Activated CD4-positive, alpha-beta T cell treated with anti-CD3 and anti-CD28 coated beads for 36 hours (primary cell): ENCODE measurements at regions of chr15 and their contacts with region 1.

Region 1: DNA sequence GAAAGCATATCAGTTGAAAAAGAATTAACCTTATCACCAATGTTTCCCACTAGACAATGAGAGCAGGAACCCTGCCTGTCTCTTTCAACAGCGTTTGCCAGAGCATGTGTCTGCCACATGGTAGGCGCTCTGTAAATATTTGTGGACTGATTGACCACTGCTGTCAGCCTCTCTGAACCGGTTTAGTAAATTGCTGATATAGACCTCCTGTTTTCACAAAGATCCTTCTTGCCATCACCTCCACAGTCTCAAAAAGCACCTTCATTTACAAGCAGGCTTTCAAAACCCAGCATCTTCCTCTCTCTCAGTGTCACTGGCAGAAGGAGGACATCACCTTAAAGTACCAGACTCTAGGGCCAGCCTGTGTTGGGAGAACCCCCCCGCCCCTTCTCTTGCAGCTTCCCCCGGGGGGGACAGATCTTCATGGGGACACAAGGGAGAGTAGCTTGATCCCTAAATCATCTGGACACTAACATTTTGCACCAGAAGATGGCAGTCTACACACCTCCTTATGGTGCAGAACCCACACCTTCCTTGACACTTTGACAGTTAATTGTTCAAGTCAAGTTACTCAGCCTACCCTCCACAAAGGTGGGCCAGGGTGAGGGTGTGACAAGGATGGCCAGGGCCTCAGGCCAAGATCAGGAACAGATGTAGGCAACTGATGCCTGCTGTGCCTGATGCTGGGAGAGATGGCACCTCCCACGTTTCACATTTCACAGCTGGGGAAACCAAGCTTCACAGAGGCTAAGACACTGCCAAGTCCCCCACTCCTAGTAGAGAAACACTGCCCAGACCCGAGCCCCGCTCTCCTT is 37.8 kb upstream of the USP3 start:
- DNase-seq: peak; percentile 62
- ATAC-seq: peak; percentile 78
- H3K4me3 Mint-ChIP-seq: no peak overlapping the region
- H3K27ac Mint-ChIP-seq: no peak overlapping the region
- H3K4me1 Mint-ChIP-seq: peaks cover 26% of the 10 kb centered on the region
- H3K27me3 Mint-ChIP-seq: no peaks in the 10 kb centered on the region

Region 2: DNA sequence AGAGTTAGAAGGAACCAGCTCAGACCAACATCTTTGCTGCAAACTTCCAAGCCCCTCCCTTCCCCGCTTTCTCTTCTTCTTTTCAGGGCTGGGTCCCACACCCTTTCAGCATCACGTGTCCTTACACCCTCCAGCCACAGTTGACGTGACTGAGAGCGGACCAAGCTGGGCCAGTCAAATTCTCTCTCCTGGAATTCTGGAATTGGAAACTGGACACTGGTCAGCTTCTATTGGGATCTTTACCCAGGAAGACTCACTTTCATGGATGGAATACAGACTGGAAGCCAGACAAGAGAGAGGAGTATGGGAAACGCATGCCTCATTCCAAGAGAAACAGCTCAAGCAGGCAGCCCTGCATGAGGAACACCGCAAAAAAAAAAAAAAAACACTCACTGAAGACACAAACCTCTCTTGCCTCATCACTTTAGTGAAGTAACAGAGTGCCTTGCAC is 436.5 kb before region 1 on chr15:
- CTCF ChIA-PET with region 1: no interaction called
- POLR2A ChIA-PET with region 1: no interaction called
- intact Hi-C with region 1: no loop called
- DNase-seq: no peak
- ATAC-seq: no peak
- H3K4me3 Mint-ChIP-seq: no peak overlapping the region
- H3K27ac Mint-ChIP-seq: no peak overlapping the region
- H3K4me1 Mint-ChIP-seq: no peaks in the 10 kb centered on the region
- H3K27me3 Mint-ChIP-seq: peaks cover 20% of the 10 kb centered on the region

Region 3: GRCh38 chr15:63238796-63239195 is 227.8 kb before region 1 on chr15:
- CTCF ChIA-PET with region 1: no interaction called
- POLR2A ChIA-PET with region 1: no interaction called
- intact Hi-C with region 1: no loop called
- DNase-seq: peak; percentile 52
- ATAC-seq: peak; percentile 83
- H3K4me3 Mint-ChIP-seq: no peak overlapping the region
- H3K27ac Mint-ChIP-seq: no peak overlapping the region
- H3K4me1 Mint-ChIP-seq: peaks cover 82% of the 10 kb centered on the region
- H3K27me3 Mint-ChIP-seq: no peaks in the 10 kb centered on the region

Region 4: GRCh38 chr15:63497642-63498467 is 31.3 kb after region 1 on chr15:
- CTCF ChIA-PET with region 1: interaction called, 7 read pairs
- POLR2A ChIA-PET with region 1: interaction called, 6 read pairs
- intact Hi-C with region 1: loop called (anchors 1 to 5 kb)
- DNase-seq: peak; percentile 71
- ATAC-seq: peak; percentile 56
- H3K4me3 Mint-ChIP-seq: no peak overlapping the region
- H3K27ac Mint-ChIP-seq: no peak overlapping the region
- H3K4me1 Mint-ChIP-seq: peaks cover 74% of the 10 kb centered on the region
- H3K27me3 Mint-ChIP-seq: no peaks in the 10 kb centered on the region

Region 5: DNA sequence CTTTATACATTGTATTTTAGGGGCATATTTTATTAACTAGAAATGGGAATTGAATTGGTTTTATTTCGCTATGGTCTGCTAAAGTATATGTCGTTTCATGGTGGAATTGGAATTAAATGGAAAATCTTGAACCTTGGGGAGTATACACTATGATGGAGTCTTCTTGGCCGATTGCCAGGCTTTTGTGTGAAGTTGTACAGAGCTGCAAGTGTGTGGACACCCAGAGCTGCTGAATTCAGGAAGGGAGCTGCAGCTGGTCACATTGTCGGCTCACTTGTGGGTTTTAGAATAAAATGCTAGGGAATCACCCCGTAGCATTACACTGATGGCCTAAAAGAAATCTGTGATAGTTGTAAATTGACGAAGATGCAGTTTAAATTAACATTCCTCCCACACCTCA is 72.9 kb after region 1 on chr15:
- CTCF ChIA-PET with region 1: interaction called, 10 read pairs
- POLR2A ChIA-PET with region 1: no interaction called
- intact Hi-C with region 1: no loop called
- DNase-seq: no peak
- ATAC-seq: no peak
- H3K4me3 Mint-ChIP-seq: no peak overlapping the region
- H3K27ac Mint-ChIP-seq: no peak overlapping the region
- H3K4me1 Mint-ChIP-seq: peaks cover 60% of the 10 kb centered on the region
- H3K27me3 Mint-ChIP-seq: no peaks in the 10 kb centered on the region

Region 6: DNA sequence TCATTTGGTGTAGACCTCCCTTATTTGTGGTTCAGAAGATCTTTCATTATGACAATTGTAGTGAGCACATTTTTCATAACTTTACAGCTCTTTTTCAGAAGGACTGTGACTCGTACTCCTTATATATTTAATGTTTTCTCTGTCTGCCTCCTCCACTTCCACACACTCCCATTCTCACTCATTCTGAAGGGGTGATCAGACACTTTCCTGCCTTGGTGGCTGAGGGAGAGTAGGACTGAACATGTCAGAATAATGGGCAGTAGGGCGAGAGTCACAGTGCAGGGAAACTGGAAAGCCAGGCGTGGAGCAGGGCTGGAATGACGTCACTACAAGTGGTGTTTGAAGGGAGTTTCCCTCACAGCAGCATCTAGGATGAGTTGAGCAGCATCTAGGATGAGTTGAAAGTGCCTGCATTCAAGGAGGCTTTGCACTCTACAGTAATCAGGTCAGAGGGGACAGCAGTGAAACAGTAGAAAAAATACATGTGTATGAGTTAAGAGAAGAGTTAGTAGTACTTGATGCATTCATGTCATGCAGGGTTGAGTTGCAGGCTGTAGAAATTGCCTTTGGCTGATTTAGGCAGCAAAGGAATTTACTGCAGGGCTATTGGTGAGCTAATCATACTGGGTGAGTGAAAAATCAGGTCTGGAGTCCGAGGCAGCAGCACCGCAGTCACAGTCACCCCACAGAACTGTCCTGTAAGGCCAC is 94.3 kb after region 1 on chr15:
- CTCF ChIA-PET with region 1: interaction called, 5 read pairs
- POLR2A ChIA-PET with region 1: no interaction called
- intact Hi-C with region 1: loop called in 1 of 2 experiments (anchors 2 kb)
- DNase-seq: peak; percentile 81
- ATAC-seq: peak; percentile 95
- H3K4me3 Mint-ChIP-seq: no peak overlapping the region
- H3K27ac Mint-ChIP-seq: peak overlapping the region; percentile 74
- H3K4me1 Mint-ChIP-seq: peaks cover 49% of the 10 kb centered on the region
- H3K27me3 Mint-ChIP-seq: no peaks in the 10 kb centered on the region

Region 7: GRCh38 chr15:63729115-63729884 is 262.7 kb after region 1 on chr15:
- CTCF ChIA-PET with region 1: no interaction called
- POLR2A ChIA-PET with region 1: interaction called, 9 read pairs
- intact Hi-C with region 1: loop called in 1 of 2 experiments (anchors 10 kb)
- DNase-seq: peak; percentile 60
- ATAC-seq: peak; percentile 85
- H3K4me3 Mint-ChIP-seq: no peak overlapping the region
- H3K27ac Mint-ChIP-seq: peak overlapping the region; percentile 61
- H3K4me1 Mint-ChIP-seq: peaks cover 20% of the 10 kb centered on the region
- H3K27me3 Mint-ChIP-seq: no peaks in the 10 kb centered on the region

Region 8: GRCh38 chr15:63848499-63849214 is 382.1 kb after region 1 on chr15:
- CTCF ChIA-PET with region 1: no interaction called
- POLR2A ChIA-PET with region 1: no interaction called
- intact Hi-C with region 1: no loop called
- DNase-seq: no peak
- ATAC-seq: no peak
- H3K4me3 Mint-ChIP-seq: no peak overlapping the region
- H3K27ac Mint-ChIP-seq: peak overlapping the region; percentile 49
- H3K4me1 Mint-ChIP-seq: peaks cover 13% of the 10 kb centered on the region
- H3K27me3 Mint-ChIP-seq: no peaks in the 10 kb centered on the region

Region 9: GRCh38 chr15:64010719-64011118 is 544.1 kb after region 1 on chr15:
- CTCF ChIA-PET with region 1: no interaction called
- POLR2A ChIA-PET with region 1: no interaction called
- intact Hi-C with region 1: no loop called
- DNase-seq: peak; percentile 90
- ATAC-seq: peak; percentile 78
- H3K4me3 Mint-ChIP-seq: peak overlapping the region; percentile 31
- H3K27ac Mint-ChIP-seq: peak overlapping the region; percentile 87
- H3K4me1 Mint-ChIP-seq: peaks cover 45% of the 10 kb centered on the region
- H3K27me3 Mint-ChIP-seq: no peaks in the 10 kb centered on the region